ENCODE measurements at regions of chr6 and their contacts with region 1.

Region 1: DNA sequence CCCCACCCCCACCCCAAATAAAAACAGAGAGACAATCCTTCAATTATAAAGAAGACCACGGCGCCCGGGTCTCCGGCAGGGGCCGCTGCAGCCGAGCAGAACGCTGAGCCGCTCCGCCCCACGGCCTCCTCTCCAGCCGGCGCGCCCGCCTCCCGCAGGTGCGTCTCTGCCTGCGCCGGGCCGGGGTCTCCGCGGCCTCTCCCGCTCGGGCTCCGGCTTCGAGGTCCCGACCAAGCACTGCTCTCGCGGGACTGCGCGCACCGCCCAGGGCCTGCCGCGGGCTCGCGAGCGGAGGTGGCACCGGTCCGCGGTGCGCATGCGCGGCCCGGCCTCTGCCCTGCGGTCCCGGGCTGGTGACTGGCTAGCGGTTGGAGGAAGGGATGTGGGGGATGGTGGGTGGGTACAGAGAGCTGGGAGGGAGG is 241 bp upstream of the SIRT5 start:
- DNase-seq: peak; percentile 91
- H3K4me3 Mint-ChIP-seq: peak overlapping the region; percentile 97
- H3K27ac Mint-ChIP-seq: peak overlapping the region; percentile 84
- H3K4me1 Mint-ChIP-seq: no peaks in the 10 kb centered on the region
- H3K27me3 Mint-ChIP-seq: no peaks in the 10 kb centered on the region
- CTCF ChIP-seq: no peak

Region 2: GRCh38 chr6:13487122-13488014 is 86.8 kb before region 1 on chr6 and contains the start of gene GFOD1:
- CTCF ChIA-PET with region 1: no interaction called
- intact Hi-C with region 1: loop called (anchors 2 kb)
- DNase-seq: peak; percentile 82
- H3K4me3 Mint-ChIP-seq: peak within 1 kb of the TSS; percentile 90
- H3K27ac Mint-ChIP-seq: peak within 1 kb of the TSS; percentile 82
- H3K4me1 Mint-ChIP-seq: peaks cover 24% of the 10 kb centered on the region
- H3K27me3 Mint-ChIP-seq: no peaks in the 10 kb centered on the region
- CTCF ChIP-seq: no peak
- total RNA-seq, gene GFOD1: 8.7 and 9.5 TPM in 2 replicates

Region 3: DNA sequence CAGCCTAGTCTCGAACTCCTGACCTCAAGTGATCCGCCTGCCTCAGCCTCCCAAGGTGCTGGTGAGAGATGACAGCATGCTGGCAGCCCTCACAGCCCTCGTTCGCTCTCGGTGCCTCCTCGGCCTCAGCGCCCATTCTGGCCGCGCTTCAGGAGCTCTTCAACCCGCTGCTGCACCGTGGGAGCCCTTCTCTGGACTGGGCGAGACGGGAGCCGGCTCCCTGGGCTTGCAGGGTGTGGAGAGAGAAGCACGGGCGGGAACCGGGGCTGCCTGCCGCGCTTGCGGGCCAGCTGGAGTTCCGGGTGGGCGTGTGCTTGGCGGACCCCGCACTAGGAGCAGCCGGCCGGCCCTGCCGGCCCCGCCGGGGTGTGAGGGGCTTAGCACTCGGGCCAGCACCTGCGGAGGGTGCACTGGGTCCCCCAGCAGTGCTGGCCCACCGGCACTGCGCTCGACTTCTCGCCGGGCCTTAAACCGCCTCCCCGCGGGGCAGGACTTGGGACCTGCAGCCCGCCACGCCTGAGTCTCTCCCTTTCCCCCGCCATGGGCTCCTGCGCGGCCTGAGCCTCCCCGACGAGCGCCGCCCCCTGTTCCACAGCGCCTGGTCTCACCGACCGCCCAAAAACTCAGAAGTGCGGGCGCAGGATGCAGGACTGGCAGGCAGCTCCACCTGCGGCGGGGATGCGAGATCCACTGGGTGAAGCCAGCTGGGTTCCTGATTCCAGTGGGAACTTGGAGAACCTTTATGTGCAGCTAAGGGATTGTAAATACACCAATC is 169.0 kb after region 1 on chr6:
- CTCF ChIA-PET with region 1: no interaction called
- intact Hi-C with region 1: no loop called
- DNase-seq: no peak
- H3K4me3 Mint-ChIP-seq: no peak overlapping the region
- H3K27ac Mint-ChIP-seq: no peak overlapping the region
- H3K4me1 Mint-ChIP-seq: no peaks in the 10 kb centered on the region
- H3K27me3 Mint-ChIP-seq: no peaks in the 10 kb centered on the region
- CTCF ChIP-seq: no peak

Region 4: GRCh38 chr6:13836170-13836569 is 262.0 kb after region 1 on chr6:
- CTCF ChIA-PET with region 1: no interaction called
- intact Hi-C with region 1: no loop called
- DNase-seq: no peak
- H3K4me3 Mint-ChIP-seq: no peak overlapping the region
- H3K27ac Mint-ChIP-seq: no peak overlapping the region
- H3K4me1 Mint-ChIP-seq: no peaks in the 10 kb centered on the region
- H3K27me3 Mint-ChIP-seq: peaks cover 15% of the 10 kb centered on the region
- CTCF ChIP-seq: no peak

Region 5: DNA sequence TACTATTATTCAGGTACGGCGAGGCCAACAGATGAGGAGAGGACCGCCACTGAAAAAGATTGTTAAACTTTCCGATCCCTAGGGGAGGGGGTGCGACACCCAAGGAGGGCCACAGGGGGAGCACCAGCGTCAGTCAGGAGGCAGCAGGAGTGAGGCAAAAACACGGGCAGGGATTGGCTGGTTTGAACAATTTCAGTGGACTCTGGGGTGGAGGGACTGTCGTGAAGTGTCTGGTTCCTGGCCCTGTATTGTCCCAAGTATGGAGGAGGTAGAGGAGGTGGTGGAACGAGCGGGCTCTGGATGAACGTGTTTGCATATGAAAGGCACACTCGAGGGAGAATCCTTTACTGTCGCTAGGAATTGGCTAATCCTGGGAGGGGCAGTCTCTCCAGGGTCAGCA is 272.7 kb after region 1 on chr6:
- CTCF ChIA-PET with region 1: no interaction called
- intact Hi-C with region 1: no loop called
- DNase-seq: no peak
- H3K4me3 Mint-ChIP-seq: no peak overlapping the region
- H3K27ac Mint-ChIP-seq: no peak overlapping the region
- H3K4me1 Mint-ChIP-seq: no peaks in the 10 kb centered on the region
- H3K27me3 Mint-ChIP-seq: peaks cover 13% of the 10 kb centered on the region
- CTCF ChIP-seq: no peak

Measured in Calu3 (cell line).